Posterior vena cava (tissue), 2 donors: ENCODE measurements at regions of chr12 and their contacts with region 1.

Region 1: GRCh38 chr12:4954621-4955354 is 45.1 kb downstream of the KCNA1 start:
- DNase-seq: no peak

Region 2: DNA sequence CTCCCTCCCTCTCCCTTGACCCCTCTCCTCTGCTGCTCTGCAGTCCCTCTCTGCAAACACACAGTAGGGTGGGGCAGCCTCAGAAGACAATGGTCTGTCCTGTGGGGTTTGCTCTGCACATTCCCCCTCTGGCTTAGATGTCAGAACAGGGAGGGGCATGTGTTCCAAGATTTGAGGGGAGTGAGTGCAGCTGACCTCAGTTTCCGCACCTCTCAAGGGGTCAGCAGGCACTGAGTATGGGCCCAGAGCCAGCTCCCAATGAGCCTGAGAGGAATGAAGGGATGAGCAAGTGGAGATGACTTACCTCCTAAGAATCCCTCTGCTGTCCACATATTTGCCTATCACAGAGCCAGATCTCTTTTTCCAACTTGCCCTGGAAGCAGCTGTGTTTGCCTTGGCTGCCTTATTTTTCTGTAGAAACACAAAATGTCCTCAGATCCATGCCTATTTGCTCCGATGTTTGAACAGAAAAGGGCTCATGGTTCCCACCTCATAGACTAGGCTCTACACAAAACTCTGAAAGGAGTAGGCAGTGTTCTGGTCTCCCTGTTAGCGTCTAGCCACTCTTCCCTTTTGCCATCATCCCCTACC is 1313.3 kb before region 1 on chr12:
- intact Hi-C with region 1: loop called in 1 of 2 experiments (anchors 5 kb)
- DNase-seq: peak; percentile 78